ENCODE measurements at regions of chr4 and their contacts with region 1.

Region 1: GRCh38 chr4:40986375-40986774 is 228.0 kb downstream of the APBB2 start:
- DNase-seq: no peak
- ATAC-seq: no peak
- H3K4me3 ChIP-seq: no peak overlapping the region
- H3K27ac ChIP-seq: no peak overlapping the region
- H3K4me1 ChIP-seq: peaks cover 16% of the 10 kb centered on the region
- H3K27me3 ChIP-seq: no peaks in the 10 kb centered on the region
- CTCF ChIP-seq: no peak
- POLR2A ChIP-seq: no peak

Region 2: DNA sequence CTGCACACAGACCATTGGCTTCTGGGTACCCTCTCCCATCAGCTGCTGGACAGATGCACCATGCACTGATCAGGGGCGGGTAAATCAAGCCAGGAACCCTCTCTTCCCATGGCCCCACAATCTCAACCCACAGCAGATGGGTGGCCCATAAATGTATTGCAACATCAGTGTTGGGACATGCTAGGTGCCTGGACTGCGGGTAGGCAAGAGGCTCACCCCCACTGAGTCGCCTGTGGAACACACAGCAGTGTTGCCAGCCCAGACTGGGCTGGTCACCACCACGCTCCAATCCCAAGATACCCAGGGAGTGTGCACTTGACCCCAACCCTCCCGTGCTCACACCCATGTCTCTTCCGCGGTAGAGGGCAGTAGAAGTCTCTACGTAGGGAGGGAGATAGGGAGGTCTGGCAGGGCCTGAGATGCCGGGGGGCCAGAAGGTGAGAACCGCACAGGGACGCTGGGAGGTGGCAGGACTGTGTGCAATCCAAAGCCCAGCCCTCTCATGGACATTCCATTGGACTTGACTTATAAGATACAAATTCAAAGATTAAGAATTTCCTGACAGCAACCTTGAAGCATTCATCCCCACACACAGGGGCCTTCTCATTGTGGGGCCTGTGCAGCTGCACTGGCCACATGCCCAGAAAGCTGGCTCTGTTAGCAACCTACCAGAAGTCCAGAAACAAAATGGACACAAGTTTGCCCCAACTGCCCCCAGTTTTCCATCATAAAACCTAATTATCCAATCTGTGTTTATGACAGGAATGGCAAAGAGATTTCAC is 52.9 kb before region 1 on chr4:
- intact Hi-C with region 1: no loop called
- DNase-seq: no peak
- ATAC-seq: no peak
- H3K4me3 ChIP-seq: no peak overlapping the region
- H3K27ac ChIP-seq: no peak overlapping the region
- H3K4me1 ChIP-seq: no peaks in the 10 kb centered on the region
- H3K27me3 ChIP-seq: no peaks in the 10 kb centered on the region
- CTCF ChIP-seq: no peak
- POLR2A ChIP-seq: no peak

Region 3: DNA sequence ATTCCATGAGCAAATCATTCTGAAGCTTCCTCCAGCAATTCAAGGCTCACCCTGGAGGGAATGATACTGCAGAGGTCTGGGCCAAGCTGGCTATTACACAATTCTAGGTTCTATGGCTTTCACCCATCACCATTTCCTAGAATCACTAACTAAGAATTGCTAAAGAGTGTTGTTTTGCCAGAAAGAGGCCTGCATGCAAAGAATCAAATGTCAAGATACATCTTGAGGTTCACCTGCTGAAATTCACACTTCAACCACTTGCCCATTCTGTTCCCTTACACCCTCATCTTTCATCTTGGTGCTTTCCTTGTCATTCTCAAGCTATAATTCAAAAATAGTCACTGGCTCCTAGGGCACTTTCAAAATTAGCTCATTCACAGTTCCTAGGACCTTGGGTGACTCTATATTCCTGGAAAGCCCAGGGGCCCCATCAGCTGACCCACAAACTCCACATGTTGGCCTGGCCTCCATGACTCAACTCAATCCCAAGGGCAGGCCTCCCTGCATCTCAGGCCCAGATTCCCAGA is 221.0 kb after region 1 on chr4:
- intact Hi-C with region 1: loop called (anchors 5 kb)
- DNase-seq: peak in 1 of 4 donors; percentile 11
- ATAC-seq: no peak
- H3K4me3 ChIP-seq: no peak overlapping the region
- H3K27ac ChIP-seq: no peak overlapping the region
- H3K4me1 ChIP-seq: peaks cover 33% of the 10 kb centered on the region
- H3K27me3 ChIP-seq: no peaks in the 10 kb centered on the region
- CTCF ChIP-seq: no peak
- POLR2A ChIP-seq: no peak